CD8-positive, alpha-beta memory T cell (primary cell): ENCODE measurements at regions of chr16 and their contacts with region 1.

Region 1: DNA sequence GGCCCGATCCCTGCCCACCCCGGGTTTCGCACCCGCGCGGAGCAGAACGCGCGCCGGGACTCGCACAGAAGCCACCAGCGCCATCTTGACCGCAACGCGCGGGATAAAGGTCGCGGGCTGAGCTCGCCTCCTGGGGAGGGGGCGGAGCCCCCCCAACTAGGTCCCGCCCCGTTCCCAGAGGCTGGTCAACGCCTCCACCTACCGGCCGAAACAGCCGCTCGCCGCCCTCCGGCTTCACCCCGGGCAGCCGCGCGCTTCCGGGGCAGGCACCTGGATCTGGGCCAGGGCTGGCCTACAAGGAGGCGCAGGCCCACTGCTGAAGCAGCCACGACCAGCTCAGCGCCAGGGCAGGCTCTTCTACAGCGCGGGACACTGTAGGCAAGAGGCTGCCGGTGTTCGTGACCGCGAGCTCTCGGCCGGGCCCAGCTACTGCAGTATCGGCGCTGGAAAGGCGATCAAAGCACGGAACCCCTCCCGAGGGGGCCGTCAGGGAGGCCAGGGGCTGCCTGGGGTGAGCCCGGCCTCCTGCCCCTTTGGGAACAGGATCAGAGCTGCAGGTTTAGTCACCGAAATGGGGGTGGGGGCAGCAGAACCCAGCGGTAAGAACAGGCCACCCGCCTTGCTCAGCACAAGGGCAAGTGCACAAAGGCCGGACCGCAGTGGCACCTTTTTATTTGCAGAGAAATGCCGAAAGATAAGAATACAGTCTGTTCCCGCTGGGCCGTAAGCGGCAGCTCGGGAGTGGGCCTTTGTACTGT is at the start of gene ECI1:
- DNase-seq: peak; percentile 65 to 84 (median 74)
- H3K4me3 ChIP-seq: peak within 1 kb of the TSS; percentile 65
- H3K4me3 Mint-ChIP-seq: peak within 1 kb of the TSS; percentile 84 to 94 (median 89)
- H3K27ac ChIP-seq: peak within 1 kb of the TSS; percentile 76
- H3K27ac Mint-ChIP-seq: peak within 1 kb of the TSS; percentile 87 to 96 (median 92)
- H3K4me1 ChIP-seq: peaks cover 8% of the 10 kb centered on the region
- H3K4me1 Mint-ChIP-seq: peaks cover 3 to 12% (median 8%) of the 10 kb centered on the region in 3 donors
- H3K27me3 ChIP-seq: no peaks in the 10 kb centered on the region
- H3K27me3 Mint-ChIP-seq: no peaks in the 10 kb centered on the region
- total RNA-seq, gene ECI1: 30.3 to 33.1 TPM

Region 2: GRCh38 chr16:2213817-2214720 is 37.6 kb before region 1 on chr16:
- CTCF ChIA-PET with region 1: interaction called, 3 read pairs
- POLR2A ChIA-PET with region 1: interaction called, 13 read pairs
- DNase-seq: no peak
- H3K4me3 ChIP-seq: peak overlapping the region; percentile 49
- H3K4me3 Mint-ChIP-seq: peak overlapping the region; percentile 70 to 88 (median 74)
- H3K27ac ChIP-seq: peak overlapping the region; percentile 51
- H3K27ac Mint-ChIP-seq: peak overlapping the region in 5 of 8 donors; percentile 19 to 95 (median 60)
- H3K4me1 ChIP-seq: peaks cover 15% of the 10 kb centered on the region
- H3K4me1 Mint-ChIP-seq: peaks cover 16 to 26% (median 17%) of the 10 kb centered on the region in 3 donors
- H3K27me3 ChIP-seq: no peaks in the 10 kb centered on the region
- H3K27me3 Mint-ChIP-seq: no peaks in the 10 kb centered on the region